ENCODE measurements at regions of chr17 and their contacts with region 1.

Region 1: DNA sequence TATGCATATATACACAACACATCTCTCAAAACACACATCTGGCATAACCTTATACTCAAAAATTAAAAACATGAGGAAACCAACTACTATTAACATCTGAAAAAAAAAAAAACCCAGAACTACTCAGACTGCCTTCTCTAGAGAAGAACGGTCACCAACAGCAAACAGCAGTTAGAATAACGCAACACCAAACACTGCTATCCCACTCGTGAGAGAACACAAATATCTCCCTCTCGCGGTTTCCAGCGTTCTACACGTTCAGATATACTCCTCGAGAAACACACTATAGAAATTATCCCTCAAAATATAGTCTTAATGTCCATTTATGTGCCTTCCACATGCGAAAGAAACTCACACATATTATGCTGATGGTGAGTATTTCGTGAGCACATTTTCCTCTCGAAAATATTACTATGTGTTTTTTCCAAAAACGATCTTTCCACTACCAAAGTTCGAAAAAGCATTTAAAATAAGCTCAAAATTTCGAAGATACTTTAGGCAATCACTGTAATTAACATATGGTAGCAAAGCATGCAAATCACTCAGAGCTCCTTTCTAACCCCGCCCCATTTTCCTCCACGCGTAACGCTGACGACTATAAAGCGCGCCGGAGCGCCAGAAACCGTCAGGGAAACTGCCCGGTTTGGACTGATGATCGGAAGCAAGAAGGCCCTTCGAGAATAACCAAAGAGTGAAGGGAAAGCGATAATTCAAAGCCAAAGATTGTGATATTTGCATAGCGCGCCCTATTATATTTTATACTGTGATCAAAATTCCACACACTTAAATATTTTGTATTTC is 60.1 kb downstream of the TEX14 start:
- DNase-seq: peak; percentile 98
- H3K4me3 Mint-ChIP-seq: no peak overlapping the region
- H3K27ac Mint-ChIP-seq: no peak overlapping the region
- H3K4me1 Mint-ChIP-seq: peaks cover 6% of the 10 kb centered on the region
- H3K27me3 Mint-ChIP-seq: no peaks in the 10 kb centered on the region
- CTCF ChIP-seq: no peak

Region 2: DNA sequence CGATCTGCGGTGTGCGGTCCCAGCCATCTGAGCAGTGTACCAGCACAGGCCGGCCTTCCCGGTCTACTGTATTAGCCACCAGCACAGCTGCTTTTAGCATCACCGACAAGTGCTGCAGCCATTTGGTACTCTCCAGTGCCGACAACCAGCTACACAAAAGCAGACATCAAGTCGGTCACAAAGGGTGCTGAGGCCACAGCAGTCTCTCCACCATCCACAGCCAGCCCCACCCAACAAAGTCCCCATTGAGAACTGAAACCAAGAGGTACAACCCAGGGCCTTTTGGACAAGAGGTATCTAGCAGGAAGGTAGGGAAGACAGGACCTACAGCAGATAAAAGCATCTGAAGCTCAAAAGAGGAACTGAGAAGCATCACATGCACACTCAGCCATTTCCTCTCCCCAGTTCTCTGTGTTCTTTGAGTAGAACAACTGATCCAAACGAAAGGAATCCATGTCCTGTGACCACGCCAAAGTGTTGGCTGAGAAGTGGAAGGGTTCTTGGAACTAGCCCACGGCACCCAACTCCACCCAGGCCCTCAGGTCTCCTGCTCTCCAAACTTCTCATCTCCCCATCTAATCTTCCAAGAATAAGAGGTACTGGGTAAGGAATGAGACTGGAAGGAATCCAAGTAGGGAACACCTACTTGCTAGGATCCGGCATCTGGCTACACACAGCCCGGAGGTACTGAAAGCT is 126.7 kb before region 1 on chr17:
- CTCF ChIA-PET with region 1: no interaction called
- POLR2A ChIA-PET with region 1: no interaction called
- intact Hi-C with region 1: no loop called
- DNase-seq: no peak
- H3K4me3 Mint-ChIP-seq: no peak overlapping the region
- H3K27ac Mint-ChIP-seq: no peak overlapping the region
- H3K4me1 Mint-ChIP-seq: peaks cover 3% of the 10 kb centered on the region
- H3K27me3 Mint-ChIP-seq: no peaks in the 10 kb centered on the region
- CTCF ChIP-seq: no peak

Region 3: DNA sequence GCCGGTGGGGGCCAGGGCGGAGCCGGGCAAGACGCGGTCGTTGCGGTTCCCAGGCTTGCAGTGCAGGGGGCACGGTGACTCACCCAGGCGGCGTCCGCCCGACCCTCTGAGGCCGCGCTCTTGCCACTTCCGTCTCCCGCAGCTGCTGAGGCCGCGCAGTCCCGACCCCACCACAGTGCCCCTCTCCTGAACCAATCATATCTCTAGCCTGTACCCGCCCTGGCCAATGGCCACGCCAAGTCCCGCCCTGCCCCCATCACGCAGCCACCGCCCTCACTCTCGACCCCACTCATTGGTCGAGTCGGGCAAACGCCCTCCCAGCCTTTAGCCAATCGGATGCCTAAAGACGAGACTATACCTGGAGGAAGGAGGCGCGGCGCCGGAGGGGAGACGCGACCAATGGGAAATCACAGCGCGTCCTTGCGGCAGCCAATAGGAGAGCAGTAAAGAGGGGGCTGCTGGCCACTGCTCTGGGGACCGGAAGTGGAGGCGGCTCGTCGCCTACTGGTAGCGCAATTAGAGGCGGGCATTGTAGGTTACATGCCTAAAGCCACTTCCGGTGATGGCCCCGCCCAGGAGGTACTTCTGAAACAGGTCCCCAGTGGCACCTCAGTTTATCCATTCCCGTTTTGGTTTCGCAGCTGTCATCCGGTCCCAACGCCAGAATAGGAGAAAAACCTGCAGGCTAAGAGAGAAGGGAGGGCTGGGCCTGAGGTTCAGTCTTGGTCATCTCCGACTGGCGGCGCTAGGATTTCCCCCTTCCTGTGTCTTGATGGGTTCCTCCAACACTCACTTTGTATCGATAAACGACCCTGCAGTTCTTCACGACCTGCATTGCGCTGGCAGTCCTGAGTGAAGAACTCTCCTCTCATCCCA is 113.8 kb before region 1 on chr17:
- CTCF ChIA-PET with region 1: interaction called, 11 read pairs
- POLR2A ChIA-PET with region 1: interaction called, 85 read pairs
- intact Hi-C with region 1: loop called (anchors 1 kb)
- DNase-seq: peak; percentile 100
- H3K4me3 Mint-ChIP-seq: peak overlapping the region; percentile 89
- H3K27ac Mint-ChIP-seq: peak overlapping the region; percentile 95
- H3K4me1 Mint-ChIP-seq: peaks cover 26% of the 10 kb centered on the region
- H3K27me3 Mint-ChIP-seq: no peaks in the 10 kb centered on the region
- CTCF ChIP-seq: no peak

Region 4: GRCh38 chr17:58531661-58532554 is 99.8 kb before region 1 on chr17:
- CTCF ChIA-PET with region 1: interaction called, 4 read pairs
- POLR2A ChIA-PET with region 1: interaction called, 12 read pairs
- intact Hi-C with region 1: no loop called
- DNase-seq: peak; percentile 37
- H3K4me3 Mint-ChIP-seq: peak overlapping the region; percentile 40
- H3K27ac Mint-ChIP-seq: no peak overlapping the region
- H3K4me1 Mint-ChIP-seq: peaks cover 24% of the 10 kb centered on the region
- H3K27me3 Mint-ChIP-seq: no peaks in the 10 kb centered on the region
- CTCF ChIP-seq: no peak

Region 5: DNA sequence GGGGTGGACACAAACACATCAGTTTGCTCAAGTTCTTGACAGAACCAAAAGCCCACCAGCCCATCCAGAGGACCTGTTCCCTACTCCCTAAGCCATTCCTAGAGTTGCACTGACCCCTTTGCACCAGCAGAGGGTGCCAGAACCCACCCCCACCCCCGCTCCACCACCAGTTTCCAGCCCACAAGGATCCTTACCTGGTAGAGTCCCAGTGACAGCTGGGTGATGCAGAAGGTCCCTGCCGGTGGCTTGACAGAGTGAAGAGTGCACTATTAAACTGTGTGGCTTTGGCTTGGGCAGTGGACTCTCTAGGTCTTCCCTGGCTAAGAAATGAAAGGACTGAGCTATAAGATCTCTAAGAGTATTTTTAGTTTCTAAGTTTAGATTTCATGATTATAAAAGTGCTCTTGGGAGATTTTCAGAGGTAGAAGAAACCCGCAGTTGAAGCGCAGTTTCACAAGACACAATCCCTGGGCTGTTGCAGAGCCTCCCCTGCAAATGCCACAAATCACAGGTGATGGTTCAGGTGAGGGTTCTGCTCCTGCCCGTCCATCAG is 43.9 kb before region 1 on chr17:
- CTCF ChIA-PET with region 1: interaction called, 9 read pairs
- POLR2A ChIA-PET with region 1: interaction called, 7 read pairs
- intact Hi-C with region 1: loop called (anchors 2 kb)
- DNase-seq: peak; percentile 65
- H3K4me3 Mint-ChIP-seq: no peak overlapping the region
- H3K27ac Mint-ChIP-seq: no peak overlapping the region
- H3K4me1 Mint-ChIP-seq: no peaks in the 10 kb centered on the region
- H3K27me3 Mint-ChIP-seq: peaks cover 13% of the 10 kb centered on the region
- CTCF ChIP-seq: peak; percentile 89

Region 6: DNA sequence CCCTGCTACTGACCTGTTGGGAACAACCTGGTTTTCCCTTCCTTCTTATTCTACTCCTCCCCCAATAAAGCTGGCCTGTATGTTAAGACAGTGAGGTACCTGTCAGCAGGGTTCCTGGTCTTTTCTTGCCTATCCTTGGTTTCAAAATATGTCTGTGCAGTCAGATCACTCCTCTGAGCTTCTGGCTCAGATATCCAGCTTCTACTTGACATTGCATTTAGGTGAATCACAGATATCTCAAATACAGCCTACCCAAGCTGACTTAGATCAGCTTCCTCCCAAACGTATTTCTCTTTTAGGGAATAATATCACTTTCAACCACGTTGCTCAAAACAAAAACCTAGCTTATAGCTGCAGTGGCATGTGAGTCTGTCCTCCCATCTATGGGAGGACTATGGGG is 11.4 kb after region 1 on chr17:
- CTCF ChIA-PET with region 1: interaction called, 9 read pairs
- POLR2A ChIA-PET with region 1: interaction called, 31 read pairs
- intact Hi-C with region 1: no loop called
- DNase-seq: no peak
- H3K4me3 Mint-ChIP-seq: no peak overlapping the region
- H3K27ac Mint-ChIP-seq: no peak overlapping the region
- H3K4me1 Mint-ChIP-seq: peaks cover 12% of the 10 kb centered on the region
- H3K27me3 Mint-ChIP-seq: no peaks in the 10 kb centered on the region
- CTCF ChIP-seq: no peak

Region 7: DNA sequence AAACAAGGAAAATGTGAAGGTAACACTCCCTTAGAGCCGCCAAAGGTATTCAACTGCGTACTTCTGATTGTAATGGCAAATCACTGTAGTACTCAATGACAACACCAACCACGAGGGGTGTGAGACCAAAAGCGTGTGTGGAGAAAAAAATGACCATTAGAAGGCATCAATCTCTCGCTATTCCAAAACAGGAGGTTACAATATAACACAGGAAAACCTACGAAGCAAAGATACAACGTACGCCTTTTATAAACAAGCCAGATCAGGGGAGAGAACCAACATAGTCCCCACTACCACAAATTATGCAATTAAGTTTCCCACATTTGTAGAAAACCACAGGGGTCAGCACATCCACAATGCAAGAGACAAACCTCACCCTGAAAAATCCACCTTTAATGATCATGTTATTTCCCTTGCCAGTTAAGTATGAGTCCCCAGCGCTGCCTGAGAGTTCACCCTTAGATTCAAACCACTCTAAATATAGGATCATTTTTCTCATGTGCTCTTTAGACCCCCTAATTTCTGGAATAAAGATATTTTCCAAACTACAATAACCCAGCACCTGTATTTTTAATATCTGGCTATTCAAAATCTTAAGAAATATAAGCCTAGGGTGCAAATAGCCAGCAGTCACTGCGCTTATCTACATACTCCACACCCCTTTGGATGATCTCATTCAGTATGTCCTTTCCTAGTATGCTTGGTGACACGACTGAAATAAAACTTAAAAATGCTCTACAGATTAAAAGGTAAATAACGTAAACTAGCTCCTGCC is 47.7 kb after region 1 on chr17:
- CTCF ChIA-PET with region 1: no interaction called
- POLR2A ChIA-PET with region 1: interaction called, 25 read pairs
- intact Hi-C with region 1: loop called (anchors 1 kb)
- DNase-seq: peak; percentile 87
- H3K4me3 Mint-ChIP-seq: peak overlapping the region; percentile 44
- H3K27ac Mint-ChIP-seq: peak overlapping the region; percentile 65
- H3K4me1 Mint-ChIP-seq: peaks cover 12% of the 10 kb centered on the region
- H3K27me3 Mint-ChIP-seq: no peaks in the 10 kb centered on the region
- CTCF ChIP-seq: no peak

Region 8: GRCh38 chr17:58699766-58700165 is 68.0 kb after region 1 on chr17:
- CTCF ChIA-PET with region 1: no interaction called
- POLR2A ChIA-PET with region 1: interaction called, 55 read pairs
- intact Hi-C with region 1: no loop called
- DNase-seq: no peak
- H3K4me3 Mint-ChIP-seq: no peak overlapping the region
- H3K27ac Mint-ChIP-seq: no peak overlapping the region
- H3K4me1 Mint-ChIP-seq: no peaks in the 10 kb centered on the region
- H3K27me3 Mint-ChIP-seq: no peaks in the 10 kb centered on the region
- CTCF ChIP-seq: no peak

Measured in MCF 10A (cell line).